ENCODE measurements at regions of chr1 and their contacts with region 1.

Region 1: DNA sequence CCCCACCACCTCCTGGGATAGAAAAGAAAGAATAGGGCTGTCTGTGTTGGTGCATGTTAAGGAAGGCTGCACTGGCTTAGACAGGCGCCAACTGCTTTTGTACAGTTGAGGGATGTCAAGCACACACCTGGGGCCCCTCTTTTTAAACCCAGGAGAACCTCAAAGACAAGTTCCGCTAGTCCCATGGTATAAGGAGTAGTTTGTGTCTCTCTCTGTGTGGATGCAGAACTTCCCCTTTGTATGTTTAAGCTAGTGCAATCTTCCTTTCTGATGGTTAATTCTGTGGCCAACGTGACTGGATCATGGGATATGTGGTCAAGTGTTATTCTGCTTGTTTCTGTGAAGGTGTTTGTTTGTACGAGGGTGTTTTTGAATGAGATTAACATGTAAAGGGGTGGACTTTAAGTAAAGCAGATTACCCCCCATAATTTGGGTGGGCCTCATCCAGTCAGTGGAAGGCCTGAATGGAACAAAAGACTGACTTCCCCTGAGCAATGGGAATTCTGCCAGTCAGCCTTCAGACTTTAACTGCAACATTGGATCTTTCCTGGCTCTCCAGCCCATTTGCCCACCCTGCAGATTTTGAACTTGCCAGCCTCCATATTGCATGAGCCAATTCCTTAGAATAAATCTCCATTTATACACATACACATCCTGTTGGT is 9.5 kb upstream of the DUSP10 start:
- DNase-seq: no peak
- ATAC-seq: no peak
- H3K4me3 ChIP-seq: no peak overlapping the region
- H3K4me3 Mint-ChIP-seq: no peak overlapping the region
- H3K27ac ChIP-seq: no peak overlapping the region
- H3K27ac Mint-ChIP-seq: no peak overlapping the region
- H3K4me1 ChIP-seq: no peaks in the 10 kb centered on the region
- H3K4me1 Mint-ChIP-seq: peaks cover 6% of the 10 kb centered on the region
- H3K27me3 ChIP-seq: no peaks in the 10 kb centered on the region
- H3K27me3 Mint-ChIP-seq: no peaks in the 10 kb centered on the region
- CTCF ChIP-seq: no peak

Region 2: DNA sequence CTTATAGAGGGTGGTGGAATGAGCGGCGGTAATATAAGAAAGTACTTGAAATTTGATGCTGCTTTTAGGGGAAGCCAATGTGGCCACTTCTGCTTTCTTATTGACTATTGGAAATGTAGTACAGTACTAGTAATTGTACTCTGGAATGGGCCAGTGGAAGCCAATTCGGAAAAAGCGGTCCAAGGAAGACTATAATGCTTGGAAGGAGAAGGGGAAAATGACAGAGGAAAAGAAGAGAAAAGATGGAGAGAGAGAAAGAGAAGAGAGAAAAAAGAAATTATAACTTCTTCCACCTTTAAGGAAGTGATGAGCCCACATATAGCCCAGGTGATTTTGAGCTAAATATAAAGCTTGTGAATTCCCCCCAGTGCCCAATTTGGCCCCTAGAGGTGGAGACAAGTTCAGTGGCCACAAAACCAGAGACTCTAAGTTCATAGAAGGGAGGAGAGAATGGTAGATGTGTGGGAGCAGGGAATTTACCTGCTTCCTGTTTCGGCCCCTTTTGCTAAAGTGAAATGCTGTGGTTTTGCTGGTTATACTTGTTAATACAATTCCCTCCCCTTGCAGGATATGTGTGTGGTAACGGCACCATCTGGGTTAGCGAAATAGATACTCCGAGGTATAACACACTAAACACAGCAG is 26.2 kb after region 1 on chr1:
- CTCF ChIA-PET with region 1: no interaction called
- POLR2A ChIA-PET with region 1: no interaction called
- intact Hi-C with region 1: loop called (anchors 1 to 2 kb)
- DNase-seq: peak in 7 of 9 experiments; percentile 21 to 93 (median 50)
- ATAC-seq: peak; percentile 72
- H3K4me3 ChIP-seq: peak overlapping the region in 1 of 2 experiments; percentile 5
- H3K4me3 Mint-ChIP-seq: peak overlapping the region; percentile 52
- H3K27ac ChIP-seq: peak overlapping the region; percentile 32 to 75
- H3K27ac Mint-ChIP-seq: peak overlapping the region; percentile 81
- H3K4me1 ChIP-seq: peaks cover 43% of the 10 kb centered on the region
- H3K4me1 Mint-ChIP-seq: peaks cover 51% of the 10 kb centered on the region
- H3K27me3 ChIP-seq: no peaks in the 10 kb centered on the region
- H3K27me3 Mint-ChIP-seq: no peaks in the 10 kb centered on the region
- CTCF ChIP-seq: no peak